ENCODE measurements at regions of chr6 and their contacts with region 1.

Region 1: GRCh38 chr6:139375232-139376016 is 976 bp upstream of the CITED2 start:
- DNase-seq: peak; percentile 93 to 94
- ATAC-seq: peak; percentile 63 to 71
- H3K4me3 ChIP-seq: peak overlapping the region; percentile 85 to 97 (median 87)
- H3K27ac ChIP-seq: peak overlapping the region; percentile 94 to 97 (median 96)
- H3K4me1 ChIP-seq: peaks cover 22 to 26% of the 10 kb centered on the region in 2 donors
- H3K27me3 ChIP-seq: no peaks in the 10 kb centered on the region
- CTCF ChIP-seq: no peak
- POLR2A ChIP-seq: peak; percentile 38 to 74

Region 2: DNA sequence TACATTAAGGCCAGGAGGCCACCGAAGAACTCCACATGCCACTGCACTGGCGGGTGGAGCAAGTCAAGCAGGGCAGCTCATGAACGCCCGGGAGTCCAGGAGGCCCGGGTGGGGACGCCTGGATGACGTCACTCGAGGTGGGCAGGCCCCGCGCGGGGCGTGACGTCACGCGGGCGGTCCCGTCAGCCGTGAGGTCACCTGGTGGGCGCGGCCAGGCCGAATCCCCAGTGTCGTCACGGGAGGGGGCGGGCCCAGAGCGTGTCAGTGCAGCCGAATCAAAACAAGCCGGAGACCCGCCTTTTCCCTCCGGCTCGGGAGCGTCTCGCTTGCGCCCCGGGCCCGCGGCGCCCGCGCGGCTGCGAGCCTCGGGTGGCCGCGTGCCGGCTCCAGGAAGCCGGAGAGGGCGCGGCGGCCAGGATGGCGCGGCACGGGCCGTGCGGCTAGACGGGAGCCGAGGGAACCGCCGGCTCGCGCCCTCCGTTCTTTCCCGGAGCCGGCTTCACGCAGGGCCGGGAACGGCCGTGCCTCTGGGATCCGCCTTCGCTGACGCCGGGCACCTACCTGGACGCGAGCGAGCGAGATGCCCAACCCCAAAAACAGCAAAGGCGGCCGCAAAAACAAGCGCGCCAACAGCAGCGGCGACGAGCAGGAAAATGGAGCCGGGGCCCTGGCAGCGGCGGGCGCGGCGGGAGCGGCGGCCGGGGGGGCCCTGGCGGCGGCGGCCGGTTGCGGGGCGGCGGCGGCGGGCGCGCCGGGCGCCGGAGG is 240.4 kb before region 1 on chr6 and contains the start of gene HECA:
- in situ Hi-C with region 1: loop called in 1 of 4 experiments (anchors 25 kb)
- intact Hi-C with region 1: loop called (anchors 5 kb)
- DNase-seq: peak; percentile 94 to 95
- ATAC-seq: peak; percentile 88 to 89
- H3K4me3 ChIP-seq: peak within 1 kb of the TSS; percentile 84 to 93 (median 88)
- H3K27ac ChIP-seq: peak within 1 kb of the TSS; percentile 92 to 96 (median 94)
- H3K4me1 ChIP-seq: peaks cover 34 to 37% of the 10 kb centered on the region in 2 donors
- H3K27me3 ChIP-seq: no peaks in the 10 kb centered on the region
- CTCF ChIP-seq: peak in 1 of 5 experiments; percentile 5
- POLR2A ChIP-seq: peak; percentile 88 to 97
- total RNA-seq, gene HECA: 34.5 to 59.1 (median 47.2) TPM

Region 3: GRCh38 chr6:139508023-139508422 is 132.6 kb after region 1 on chr6:
- in situ Hi-C with region 1: no loop called
- intact Hi-C with region 1: loop called (anchors 5 kb)
- DNase-seq: peak in 1 of 2 donors; percentile 6
- ATAC-seq: peak; percentile 87 to 89
- H3K4me3 ChIP-seq: no peak overlapping the region
- H3K27ac ChIP-seq: no peak overlapping the region
- H3K4me1 ChIP-seq: peaks cover 3 to 11% of the 10 kb centered on the region in 2 donors
- H3K27me3 ChIP-seq: no peaks in the 10 kb centered on the region
- CTCF ChIP-seq: no peak
- POLR2A ChIP-seq: no peak

Region 4: DNA sequence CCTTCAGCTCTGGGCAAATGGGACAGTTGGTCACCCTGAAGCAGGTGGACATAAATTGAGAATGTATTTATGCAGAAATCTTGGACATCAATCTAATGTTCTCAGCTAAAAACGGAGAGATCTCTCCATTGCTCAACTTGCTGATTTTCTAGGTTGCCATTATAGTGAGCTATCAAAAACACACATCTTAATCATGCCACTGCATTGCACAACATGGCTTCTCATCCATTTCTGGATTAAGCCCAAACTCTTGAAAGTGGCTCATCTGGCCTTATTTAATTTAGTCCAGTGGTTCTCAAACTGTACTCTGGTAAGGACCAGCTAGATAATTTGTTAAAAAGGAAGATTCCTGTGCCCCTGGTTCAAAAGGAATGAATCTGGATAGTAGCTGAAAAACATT is 323.9 kb after region 1 on chr6:
- in situ Hi-C with region 1: no loop called
- intact Hi-C with region 1: loop called (anchors 10 kb)
- DNase-seq: no peak
- ATAC-seq: peak; percentile 46 to 63
- H3K4me3 ChIP-seq: no peak overlapping the region
- H3K27ac ChIP-seq: peak overlapping the region; percentile 5 to 52 (median 28)
- H3K4me1 ChIP-seq: peaks cover 7 to 8% of the 10 kb centered on the region in 2 donors
- H3K27me3 ChIP-seq: no peaks in the 10 kb centered on the region
- CTCF ChIP-seq: no peak
- POLR2A ChIP-seq: no peak

Region 5: DNA sequence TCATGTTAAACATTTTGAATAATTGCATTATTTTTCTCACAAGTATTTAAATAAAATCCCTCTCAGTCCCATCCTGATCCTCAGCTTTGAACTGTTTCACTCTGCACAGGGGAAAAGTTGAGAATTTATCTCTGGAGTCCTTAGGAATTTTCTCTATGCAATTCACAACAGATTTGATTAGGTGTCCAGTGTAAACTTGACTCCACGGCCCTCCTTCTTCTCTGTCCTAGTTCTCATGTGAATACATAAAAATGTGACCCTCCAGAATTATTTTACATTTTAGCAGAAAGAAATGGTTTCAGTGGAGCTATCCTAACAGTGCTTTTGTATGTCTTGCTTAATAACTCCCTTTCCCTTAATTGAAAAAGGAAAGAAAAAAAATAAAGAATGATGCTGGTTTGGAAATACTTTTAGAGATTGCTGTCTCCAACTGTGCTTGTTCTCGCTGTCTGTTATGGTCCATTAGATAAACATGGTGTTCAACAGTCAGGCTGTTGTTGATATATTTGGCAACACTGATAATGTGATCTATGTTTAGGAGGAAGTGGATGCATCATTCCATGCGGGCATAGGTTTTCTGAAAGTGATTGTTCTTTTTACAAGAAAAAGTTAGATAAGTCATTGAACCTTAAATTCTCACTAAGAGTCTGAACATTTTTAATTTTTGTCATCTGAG is 598.4 kb after region 1 on chr6:
- in situ Hi-C with region 1: no loop called
- intact Hi-C with region 1: loop called (anchors 5 kb)
- DNase-seq: no peak
- ATAC-seq: peak in 1 of 2 donors; percentile 84
- H3K4me3 ChIP-seq: no peak overlapping the region
- H3K27ac ChIP-seq: peak overlapping the region in 2 of 4 donors; percentile 4 to 37
- H3K4me1 ChIP-seq: peaks cover 12 to 17% of the 10 kb centered on the region in 2 donors
- H3K27me3 ChIP-seq: no peaks in the 10 kb centered on the region
- CTCF ChIP-seq: no peak
- POLR2A ChIP-seq: no peak